SK-N-SH (cell line): ENCODE measurements at regions of chr14 and their contacts with region 1.

Region 1: GRCh38 chr14:71138448-71139293 is 231.4 kb downstream of the PCNX1 start:
- DNase-seq: peak; percentile 85
- H3K4me3 ChIP-seq: no peak overlapping the region; a peak in 1 of 4 replicates
- H3K27ac ChIP-seq: no peak overlapping the region
- H3K4me1 ChIP-seq: peaks cover 4 to 11% of the 10 kb centered on the region in 2 experiments; a peak in 2 of 4 replicates
- H3K27me3 ChIP-seq: no peaks in the 10 kb centered on the region
- CTCF ChIP-seq: peak; percentile 95
- EP300 ChIP-seq: no peak
- RAD21 ChIP-seq: peak; percentile 93

Region 2: GRCh38 chr14:71113376-71113775 is 25.3 kb before region 1 on chr14:
- CTCF ChIA-PET with region 1: no interaction called
- POLR2A ChIA-PET with region 1: no interaction called
- DNase-seq: no peak
- H3K4me3 ChIP-seq: no peak overlapping the region
- H3K27ac ChIP-seq: peak overlapping the region in 1 of 2 experiments; percentile 29; a peak in 2 of 4 replicates
- H3K4me1 ChIP-seq: peaks cover 4 to 15% of the 10 kb centered on the region in 2 experiments; a peak in 2 of 4 replicates
- H3K27me3 ChIP-seq: no peaks in the 10 kb centered on the region
- CTCF ChIP-seq: no peak
- EP300 ChIP-seq: no peak
- RAD21 ChIP-seq: no peak

Region 3: DNA sequence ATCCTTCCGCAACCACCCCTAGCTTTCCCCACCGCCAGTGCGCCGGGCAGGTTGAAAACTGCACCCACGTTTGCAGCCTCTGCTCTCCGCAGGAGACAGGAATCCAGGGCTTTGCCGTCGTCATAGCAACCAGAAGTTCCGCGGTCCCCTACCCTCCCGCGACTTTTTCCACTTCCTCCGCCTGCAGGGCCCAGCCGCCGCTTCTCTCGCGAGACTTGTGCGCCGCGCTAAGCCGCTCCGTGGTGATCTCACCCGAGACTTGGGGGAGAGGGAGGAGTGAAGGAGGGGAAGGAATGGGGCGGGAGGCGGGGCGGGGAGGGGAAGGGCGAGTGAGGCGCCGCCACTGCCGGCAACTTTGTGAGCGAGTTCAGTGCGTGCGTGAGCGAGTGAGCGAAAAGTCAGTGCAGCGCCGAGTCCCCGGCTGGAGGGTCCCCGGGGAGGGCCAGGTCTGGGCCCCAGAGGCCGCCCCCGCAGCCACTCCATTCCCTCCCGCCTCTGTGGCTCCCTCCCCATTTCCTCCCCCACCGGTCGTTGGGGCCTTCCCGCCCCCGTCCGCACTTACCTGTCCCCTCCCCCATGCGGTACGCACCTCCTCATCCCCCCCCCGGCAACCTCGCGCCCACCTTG is 181.5 kb after region 1 on chr14:
- CTCF ChIA-PET with region 1: interaction called, 42 read pairs
- POLR2A ChIA-PET with region 1: no interaction called
- DNase-seq: peak; percentile 95
- H3K4me3 ChIP-seq: peak within 1 kb of the TSS; percentile 95 to 96
- H3K27ac ChIP-seq: peak within 1 kb of the TSS; percentile 79 to 92
- H3K4me1 ChIP-seq: peaks cover 12 to 15% of the 10 kb centered on the region in 2 experiments; a peak in 3 of 4 replicates
- H3K27me3 ChIP-seq: no peaks in the 10 kb centered on the region
- CTCF ChIP-seq: no peak
- EP300 ChIP-seq: no peak
- RAD21 ChIP-seq: no peak; the same call in 1 of the 2 replicates

Region 4: GRCh38 chr14:71855399-71856036 is 716.8 kb after region 1 on chr14:
- CTCF ChIA-PET with region 1: interaction called, 27 read pairs
- POLR2A ChIA-PET with region 1: no interaction called
- DNase-seq: peak; percentile 65
- H3K4me3 ChIP-seq: no peak overlapping the region; a peak in 1 of 4 replicates
- H3K27ac ChIP-seq: no peak overlapping the region
- H3K4me1 ChIP-seq: no peaks in the 10 kb centered on the region; a peak in 2 of 4 replicates
- H3K27me3 ChIP-seq: no peaks in the 10 kb centered on the region
- CTCF ChIP-seq: peak; percentile 83
- EP300 ChIP-seq: no peak
- RAD21 ChIP-seq: peak; percentile 79